PC-3 (cell line): ENCODE measurements at regions of chr1 and their contacts with region 1.

Region 1: DNA sequence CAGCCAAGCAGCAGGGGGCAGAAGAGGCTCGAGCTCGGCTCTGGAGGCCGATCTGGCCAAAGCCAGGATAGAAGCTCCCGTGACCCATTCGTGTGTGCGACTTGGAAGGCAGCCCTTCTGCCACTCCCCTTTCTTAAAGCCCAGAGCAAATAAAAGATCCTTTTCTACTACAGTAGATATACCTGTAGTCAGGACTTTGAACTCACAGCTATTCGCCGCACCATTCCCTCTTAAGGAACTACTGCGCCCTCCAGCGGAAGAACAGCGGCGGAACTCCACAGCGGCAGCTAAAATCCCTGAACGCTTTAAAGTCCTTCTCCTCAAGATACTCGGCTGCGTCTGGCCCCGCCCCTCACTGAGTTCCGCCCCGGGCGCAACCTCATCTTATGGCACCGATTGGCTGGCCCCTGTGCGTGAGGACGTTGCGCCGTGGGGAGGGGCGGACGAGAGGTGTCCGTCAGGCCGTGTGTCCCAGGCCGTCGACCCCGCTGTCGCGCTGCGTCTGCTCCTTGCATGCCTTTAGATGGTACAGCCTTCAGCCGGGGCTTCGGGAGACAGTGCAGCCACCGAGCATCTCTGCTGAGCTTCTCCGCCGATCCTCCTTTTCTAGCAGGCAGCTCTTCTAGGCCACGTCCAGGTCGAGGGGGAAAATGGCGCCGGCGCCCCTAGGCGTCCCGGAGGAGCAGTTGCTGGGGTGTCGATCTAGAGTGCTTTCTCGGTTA is at the start of gene LRIG2:
- DNase-seq: peak; percentile 99
- ATAC-seq: peak; percentile 95
- H3K4me3 ChIP-seq: peak within 1 kb of the TSS; percentile 97
- H3K27ac ChIP-seq: peak within 1 kb of the TSS; percentile 66
- H3K4me1 ChIP-seq: peaks cover 9% of the 10 kb centered on the region
- H3K27me3 ChIP-seq: no peaks in the 10 kb centered on the region
- CTCF ChIP-seq: peak; percentile 90
- total RNA-seq, gene LRIG2: 6.1 and 8.4 TPM in 2 replicates

Region 2: GRCh38 chr1:112715264-112716053 is 357.5 kb before region 1 on chr1 and contains the start of gene PPM1J:
- CTCF ChIA-PET with region 1: interaction called, 12 read pairs
- POLR2A ChIA-PET with region 1: no interaction called
- intact Hi-C with region 1: loop called (anchors 2 kb)
- DNase-seq: peak; percentile 97
- ATAC-seq: peak; percentile 78
- H3K4me3 ChIP-seq: peak within 1 kb of the TSS; percentile 70
- H3K27ac ChIP-seq: no peak within 1 kb of the TSS
- H3K4me1 ChIP-seq: peaks cover 13% of the 10 kb centered on the region; the same call in 1 of the 2 replicates
- H3K27me3 ChIP-seq: no peaks in the 10 kb centered on the region
- CTCF ChIP-seq: no peak
- total RNA-seq, gene PPM1J: 0.80 and 1.4 TPM in 2 replicates

Region 3: GRCh38 chr1:112882271-112882744 is 190.6 kb before region 1 on chr1:
- CTCF ChIA-PET with region 1: interaction called, 10 read pairs
- POLR2A ChIA-PET with region 1: no interaction called
- intact Hi-C with region 1: loop called (anchors 10 kb)
- DNase-seq: no peak
- ATAC-seq: no peak
- H3K4me3 ChIP-seq: no peak overlapping the region
- H3K27ac ChIP-seq: no peak overlapping the region
- H3K4me1 ChIP-seq: peaks cover 6% of the 10 kb centered on the region
- H3K27me3 ChIP-seq: no peaks in the 10 kb centered on the region
- CTCF ChIP-seq: no peak

Region 4: GRCh38 chr1:113042285-113043143 is 30.4 kb before region 1 on chr1:
- CTCF ChIA-PET with region 1: interaction called, 25 read pairs
- POLR2A ChIA-PET with region 1: interaction called, 23 read pairs
- intact Hi-C with region 1: loop called (anchors 2 kb)
- DNase-seq: peak; percentile 90
- ATAC-seq: peak; percentile 91
- H3K4me3 ChIP-seq: peak overlapping the region; percentile 12; the same call in 1 of the 2 replicates
- H3K27ac ChIP-seq: peak overlapping the region; percentile 66
- H3K4me1 ChIP-seq: peaks cover 27% of the 10 kb centered on the region
- H3K27me3 ChIP-seq: no peaks in the 10 kb centered on the region
- CTCF ChIP-seq: peak; percentile 84

Region 5: GRCh38 chr1:113109908-113110554 is 37.1 kb after region 1 on chr1:
- CTCF ChIA-PET with region 1: interaction called, 5 read pairs
- POLR2A ChIA-PET with region 1: no interaction called
- intact Hi-C with region 1: loop called (anchors 2 kb)
- DNase-seq: peak; percentile 81
- ATAC-seq: peak; percentile 100
- H3K4me3 ChIP-seq: no peak overlapping the region
- H3K27ac ChIP-seq: peak overlapping the region; percentile 82
- H3K4me1 ChIP-seq: peaks cover 10% of the 10 kb centered on the region
- H3K27me3 ChIP-seq: no peaks in the 10 kb centered on the region
- CTCF ChIP-seq: peak; percentile 56

Region 6: GRCh38 chr1:113677250-113678158 is 604.6 kb after region 1 on chr1:
- CTCF ChIA-PET with region 1: no interaction called
- POLR2A ChIA-PET with region 1: no interaction called
- intact Hi-C with region 1: loop called (anchors 2 kb)
- DNase-seq: peak; percentile 75
- ATAC-seq: 0 out of 2 replicates have a peak, but pooled peaks have one; percentile 18
- H3K4me3 ChIP-seq: no peak overlapping the region
- H3K27ac ChIP-seq: no peak overlapping the region
- H3K4me1 ChIP-seq: peaks cover 38% of the 10 kb centered on the region
- H3K27me3 ChIP-seq: no peaks in the 10 kb centered on the region
- CTCF ChIP-seq: peak; percentile 85